Posterior vena cava (tissue), 2 donors: ENCODE measurements at regions of chr10 and their contacts with region 1.

Region 1: GRCh38 chr10:58291538-58292174 is 22.7 kb downstream of the CISD1 start:
- DNase-seq: no peak

Region 2: GRCh38 chr10:58177362-58177947 is 114.2 kb before region 1 on chr10:
- intact Hi-C with region 1: loop called (anchors 5 kb)
- DNase-seq: no peak

Region 3: DNA sequence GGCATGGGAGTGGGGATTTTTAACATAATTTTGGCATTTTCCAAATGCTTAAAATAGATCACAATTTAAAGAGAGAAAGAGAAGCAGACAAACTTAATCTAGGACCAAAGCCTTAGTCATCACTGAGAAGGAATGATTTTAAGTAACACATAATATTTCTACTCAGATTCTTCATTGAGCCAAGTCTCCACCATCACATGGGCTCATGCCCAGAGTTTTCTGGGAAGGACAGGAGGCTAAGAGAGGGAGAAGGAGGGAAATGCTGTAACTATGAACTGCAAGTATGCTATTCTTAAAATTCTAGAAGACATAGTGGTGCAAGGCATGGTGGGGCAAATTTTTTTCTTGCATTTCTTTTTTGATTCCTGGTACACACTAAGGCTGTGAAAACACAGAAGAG is 19.4 kb after region 1 on chr10:
- intact Hi-C with region 1: no loop called
- DNase-seq: no peak